GM12878 (cell line): ENCODE measurements at regions of chr3 and their contacts with region 1.

Region 1: GRCh38 chr3:102699819-102700140 is 265.0 kb downstream of the ZPLD1 start:
- DNase-seq: no peak
- ATAC-seq: no peak
- H3K4me3 ChIP-seq: no peak overlapping the region
- H3K27ac ChIP-seq: no peak overlapping the region
- H3K4me1 ChIP-seq: no peaks in the 10 kb centered on the region
- H3K27me3 ChIP-seq: no peaks in the 10 kb centered on the region
- CTCF ChIP-seq: no peak
- EP300 ChIP-seq: no peak
- POLR2A ChIP-seq: no peak
- RAD21 ChIP-seq: no peak

Region 2: DNA sequence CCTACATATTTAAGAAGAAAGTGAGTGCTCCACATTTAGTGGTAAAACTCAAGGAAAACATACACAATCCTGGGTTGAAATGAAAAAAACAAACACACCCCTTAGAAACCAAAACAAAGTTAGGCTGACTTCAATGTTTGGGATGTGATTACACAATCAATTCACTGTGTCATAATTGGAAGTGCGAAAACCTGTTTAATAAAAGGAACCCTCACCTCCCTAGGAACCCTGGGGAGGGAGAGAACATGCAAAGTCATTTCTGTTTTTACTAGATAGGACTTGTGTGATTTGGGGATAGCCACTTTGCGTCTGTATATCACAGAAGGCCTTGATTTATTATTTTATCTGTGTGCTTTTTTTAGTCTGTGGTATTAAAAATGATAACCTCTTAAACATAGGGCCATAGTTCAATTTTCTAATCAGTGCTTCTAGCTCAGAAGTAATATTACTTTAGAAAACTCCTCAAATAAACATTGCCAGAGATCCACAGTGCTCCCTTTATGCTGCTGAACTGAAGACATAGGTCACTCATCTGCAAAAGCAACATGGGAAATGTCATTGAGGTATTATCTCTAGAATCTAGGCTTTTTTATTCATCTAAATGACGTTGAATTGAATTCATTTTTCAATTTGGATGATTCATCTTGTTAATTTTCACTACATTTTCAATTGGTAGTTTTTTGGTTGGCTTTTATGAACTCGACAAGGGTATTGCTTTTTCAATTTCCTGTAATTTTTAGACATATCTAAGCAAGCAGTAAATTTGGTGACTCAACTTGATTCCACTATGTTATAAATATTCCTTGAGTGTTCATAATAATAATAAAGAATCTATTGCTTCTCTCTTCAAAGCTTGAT is 575.2 kb before region 1 on chr3:
- CTCF ChIA-PET with region 1: no interaction called
- POLR2A ChIA-PET with region 1: no interaction called
- RAD21 ChIA-PET with region 1: no interaction called
- SMC1A ChIA-PET with region 1: no interaction called
- in situ Hi-C with region 1: no loop called
- intact Hi-C with region 1: no loop called
- DNase-seq: no peak
- ATAC-seq: no peak
- H3K4me3 ChIP-seq: no peak overlapping the region
- H3K27ac ChIP-seq: no peak overlapping the region
- H3K4me1 ChIP-seq: no peaks in the 10 kb centered on the region
- H3K27me3 ChIP-seq: no peaks in the 10 kb centered on the region
- CTCF ChIP-seq: no peak
- EP300 ChIP-seq: no peak
- POLR2A ChIP-seq: no peak
- RAD21 ChIP-seq: no peak

Region 3: GRCh38 chr3:102745882-102746281 is 46.1 kb after region 1 on chr3:
- CTCF ChIA-PET with region 1: interaction called, 34 read pairs
- POLR2A ChIA-PET with region 1: no interaction called
- RAD21 ChIA-PET with region 1: interaction called, 19 read pairs
- SMC1A ChIA-PET with region 1: interaction called, 9 read pairs
- in situ Hi-C with region 1: no loop called
- intact Hi-C with region 1: no loop called
- DNase-seq: no peak
- ATAC-seq: peak; percentile 16; the same call in 1 of the 3 replicates
- H3K4me3 ChIP-seq: no peak overlapping the region
- H3K27ac ChIP-seq: no peak overlapping the region
- H3K4me1 ChIP-seq: no peaks in the 10 kb centered on the region
- H3K27me3 ChIP-seq: no peaks in the 10 kb centered on the region
- CTCF ChIP-seq: peak in 1 of 3 experiments; percentile 15; a peak in 1 of 6 replicates
- EP300 ChIP-seq: no peak
- POLR2A ChIP-seq: no peak
- RAD21 ChIP-seq: no peak

Region 4: DNA sequence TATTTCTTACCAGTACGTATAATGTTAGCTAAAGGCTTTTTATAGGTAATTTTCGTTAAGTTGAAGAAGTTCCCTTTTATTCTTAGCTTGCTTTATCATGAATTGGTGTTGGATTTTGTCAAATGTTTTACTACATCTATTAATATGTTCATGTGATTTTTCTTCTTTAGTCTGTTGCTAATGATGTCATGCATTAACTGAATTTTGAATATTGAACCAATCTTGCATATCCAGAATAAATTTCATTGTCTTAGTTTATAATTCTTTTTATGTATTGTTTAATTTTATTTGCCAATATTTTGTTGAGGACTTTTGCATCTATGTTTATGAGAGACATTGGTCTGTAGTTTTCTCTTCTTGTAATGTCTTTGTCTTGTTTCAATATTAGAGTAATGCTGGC is 119.2 kb after region 1 on chr3:
- CTCF ChIA-PET with region 1: no interaction called
- POLR2A ChIA-PET with region 1: no interaction called
- RAD21 ChIA-PET with region 1: no interaction called
- SMC1A ChIA-PET with region 1: no interaction called
- in situ Hi-C with region 1: no loop called
- intact Hi-C with region 1: no loop called
- DNase-seq: no peak
- ATAC-seq: no peak
- H3K4me3 ChIP-seq: no peak overlapping the region
- H3K27ac ChIP-seq: no peak overlapping the region
- H3K4me1 ChIP-seq: no peaks in the 10 kb centered on the region
- H3K27me3 ChIP-seq: no peaks in the 10 kb centered on the region
- CTCF ChIP-seq: no peak
- EP300 ChIP-seq: no peak
- POLR2A ChIP-seq: no peak
- RAD21 ChIP-seq: no peak